Prostate gland (tissue), 2 donors: ENCODE measurements at regions of chr15 and their contacts with region 1.

Region 1: DNA sequence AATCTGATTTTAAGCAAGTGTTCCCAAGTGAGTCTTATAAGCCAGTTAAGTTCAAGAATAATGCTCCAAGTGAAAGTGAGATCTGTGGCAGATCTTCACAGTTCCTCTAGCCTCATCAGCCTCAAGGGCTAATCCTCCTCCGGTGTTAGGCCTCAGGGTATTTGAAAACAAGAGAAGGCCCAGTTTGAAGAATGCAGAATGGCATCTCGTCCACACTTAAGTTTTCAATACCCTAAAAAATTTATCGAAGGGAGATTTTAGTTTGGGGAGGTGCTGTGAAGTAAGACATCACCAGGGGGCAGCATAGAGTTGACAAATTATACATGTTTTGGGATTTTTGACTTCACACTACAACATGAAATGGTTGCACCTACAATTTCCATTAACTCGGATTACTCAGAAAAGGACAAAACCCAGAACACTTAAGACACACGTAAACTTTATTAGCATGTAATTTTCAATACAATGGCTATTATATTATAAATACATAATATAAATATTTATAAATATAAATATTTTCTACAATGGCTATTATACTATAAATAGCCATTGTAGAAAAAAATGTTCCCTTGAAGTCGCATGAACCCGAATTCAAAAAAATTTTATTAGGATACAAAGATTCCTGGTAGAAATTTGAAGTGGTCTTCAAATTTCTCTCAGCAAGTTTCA is 2.3 kb upstream of the TMEM266 start:
- DNase-seq: peak; percentile 28
- H3K4me3 ChIP-seq: no peak overlapping the region
- H3K27ac ChIP-seq: no peak overlapping the region
- H3K4me1 ChIP-seq: no peaks in the 10 kb centered on the region
- H3K27me3 ChIP-seq: no peaks in the 10 kb centered on the region
- CTCF ChIP-seq: peak; percentile 33 to 66 (median 62)
- POLR2A ChIP-seq: no peak

Region 2: GRCh38 chr15:75606711-75607699 is 450.5 kb before region 1 on chr15:
- intact Hi-C with region 1: no loop called
- DNase-seq: no peak
- H3K4me3 ChIP-seq: no peak overlapping the region
- H3K27ac ChIP-seq: no peak overlapping the region
- H3K4me1 ChIP-seq: no peaks in the 10 kb centered on the region
- H3K27me3 ChIP-seq: no peaks in the 10 kb centered on the region
- CTCF ChIP-seq: no peak
- POLR2A ChIP-seq: no peak

Region 3: DNA sequence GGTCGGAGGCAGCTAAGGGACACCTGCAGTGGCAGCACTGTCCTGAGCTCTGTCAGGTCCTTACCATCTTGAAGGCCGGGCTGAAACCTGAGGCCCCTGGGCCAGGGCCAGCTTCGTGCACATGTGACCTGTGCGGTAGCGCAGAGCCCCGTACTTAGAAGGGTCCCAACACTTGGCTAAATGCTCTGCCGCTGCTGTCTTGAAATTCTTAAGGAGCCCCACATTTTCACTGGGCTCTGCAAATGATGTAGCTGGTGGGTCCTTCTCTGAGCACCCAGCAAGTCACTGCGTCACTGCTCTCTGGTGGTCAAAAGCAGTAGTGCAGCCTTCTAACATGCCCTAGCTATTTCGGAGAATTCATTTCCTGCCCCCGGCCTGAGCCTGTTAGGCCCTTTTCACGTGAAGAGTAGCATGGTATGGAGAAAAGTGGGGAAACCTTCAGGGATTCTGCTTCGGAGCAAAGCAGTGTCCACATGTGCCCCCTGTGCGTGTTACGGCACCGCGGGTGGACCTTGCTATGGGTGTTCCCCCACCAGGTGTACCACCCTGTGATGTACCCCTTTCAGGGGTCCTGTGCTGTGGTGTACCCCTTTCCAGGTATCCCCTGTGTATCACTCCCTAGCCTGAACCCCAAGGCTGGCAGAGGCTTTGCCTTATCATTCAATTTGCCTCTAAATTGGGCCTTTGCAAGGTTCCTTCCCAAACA is 82.1 kb after region 1 on chr15:
- intact Hi-C with region 1: loop called (anchors 5 kb)
- DNase-seq: peak; percentile 72
- H3K4me3 ChIP-seq: no peak overlapping the region
- H3K27ac ChIP-seq: no peak overlapping the region
- H3K4me1 ChIP-seq: peaks cover 3% of the 10 kb centered on the region
- H3K27me3 ChIP-seq: no peaks in the 10 kb centered on the region
- CTCF ChIP-seq: peak; percentile 81 to 91 (median 88)
- POLR2A ChIP-seq: no peak